Activated T-helper 1 cell treated with anti-CD3 and anti-CD28 coated beads, Interleukin-12 subunit alpha, Interleukin-12 subunit beta, Interleukin-2, Interleukin-4 antibody, amounts not matched to agents 30 ng/mL and 10 ng/mL and 1 ng/mL, durations not matched to agents 14 hours and 24 hours and 36 hours (primary cell): ENCODE measurements at regions of chr15 and their contacts with region 1.

Region 1: DNA sequence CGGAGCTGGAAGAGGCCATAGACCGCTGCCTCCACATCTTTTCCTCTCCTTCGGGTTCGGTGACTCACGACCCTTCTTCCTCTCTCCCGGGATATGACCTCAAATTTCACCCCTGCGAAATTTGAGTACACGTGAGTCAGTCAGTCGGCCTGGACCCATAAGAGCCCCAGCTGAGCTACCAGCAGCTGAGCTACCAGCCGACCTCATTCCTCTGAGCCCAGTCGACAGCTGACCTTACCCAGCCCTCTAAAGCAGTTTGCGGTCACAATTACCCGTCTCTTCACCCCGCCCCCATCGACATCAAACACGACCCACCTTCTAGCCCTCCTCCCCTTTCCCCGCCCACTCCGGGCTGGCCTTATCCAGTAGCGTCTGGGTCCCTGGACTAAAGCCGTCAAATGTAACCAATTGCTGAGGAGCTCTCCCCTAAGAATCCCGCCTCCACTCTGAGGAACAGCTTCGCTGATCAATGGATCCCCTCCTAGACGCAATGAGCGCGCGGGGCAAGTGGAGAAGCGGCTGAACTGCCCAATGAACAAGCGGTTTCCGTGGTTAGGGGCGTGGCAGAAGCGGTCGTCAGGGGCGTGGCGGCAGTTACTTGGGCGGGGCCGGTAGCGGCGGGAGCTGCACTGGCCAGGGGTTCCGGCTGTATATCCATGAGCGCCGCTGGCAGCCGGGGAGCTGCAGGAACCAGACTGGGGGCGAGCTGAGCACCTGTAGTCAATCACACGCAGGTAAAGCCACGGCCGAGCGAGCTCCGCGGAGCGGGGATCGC is at the start of gene ABHD2:
- DNase-seq: peak; percentile 98
- H3K4me3 Mint-ChIP-seq: no peak within 1 kb of the TSS
- H3K27ac Mint-ChIP-seq: no peak within 1 kb of the TSS
- H3K4me1 Mint-ChIP-seq: peaks cover 33% of the 10 kb centered on the region
- H3K27me3 Mint-ChIP-seq: no peaks in the 10 kb centered on the region
- total RNA-seq, gene ABHD2: 66.5 and 66.7 TPM in 2 replicates

Region 2: GRCh38 chr15:88904624-88905327 is 183.2 kb before region 1 on chr15:
- intact Hi-C with region 1: loop called (anchors 2 kb)
- DNase-seq: peak; percentile 86
- H3K4me3 Mint-ChIP-seq: no peak overlapping the region
- H3K27ac Mint-ChIP-seq: peak overlapping the region; percentile 19
- H3K4me1 Mint-ChIP-seq: peaks cover 22% of the 10 kb centered on the region
- H3K27me3 Mint-ChIP-seq: no peaks in the 10 kb centered on the region

Region 3: DNA sequence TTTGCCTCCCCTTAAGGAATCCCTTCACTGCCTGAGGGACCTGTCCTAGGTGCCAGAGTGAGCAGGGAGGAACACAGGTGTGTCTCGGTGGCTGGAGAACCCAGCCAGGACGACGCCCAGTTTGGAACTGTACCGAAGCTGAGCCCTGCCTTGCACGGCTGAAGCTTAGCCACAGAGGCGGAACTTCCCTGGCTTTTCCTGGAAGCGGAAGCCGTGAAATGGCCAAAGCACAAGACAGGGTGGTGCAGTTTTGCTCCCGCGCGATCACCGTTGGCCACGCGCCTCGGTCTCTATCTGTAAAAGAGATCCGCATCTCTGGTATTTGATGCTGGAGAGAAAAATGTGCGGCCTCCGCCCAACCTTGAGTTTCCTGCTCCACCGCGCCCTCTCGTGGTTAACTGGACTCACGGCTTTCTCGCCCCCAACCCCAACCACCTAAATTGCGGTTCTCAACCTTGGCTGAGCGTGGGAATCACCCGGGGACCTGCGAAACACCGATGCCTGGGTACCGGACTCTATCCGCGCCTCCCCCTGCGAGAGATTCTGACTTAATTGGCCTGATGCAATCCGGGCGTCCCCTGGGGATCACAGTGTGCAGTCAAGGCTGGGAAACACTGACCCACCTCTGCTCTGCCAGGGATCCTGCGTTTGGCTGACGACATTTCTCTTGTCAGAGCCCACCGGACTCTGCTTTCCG is 70.5 kb before region 1 on chr15:
- intact Hi-C with region 1: no loop called
- DNase-seq: peak; percentile 70
- H3K4me3 Mint-ChIP-seq: peak overlapping the region; percentile 61
- H3K27ac Mint-ChIP-seq: peak overlapping the region; percentile 61
- H3K4me1 Mint-ChIP-seq: peaks cover 27% of the 10 kb centered on the region
- H3K27me3 Mint-ChIP-seq: peaks cover 32% of the 10 kb centered on the region

Region 4: GRCh38 chr15:89068325-89068784 is 19.7 kb before region 1 on chr15:
- intact Hi-C with region 1: loop called (anchors 1 kb)
- DNase-seq: peak; percentile 11
- H3K4me3 Mint-ChIP-seq: peak overlapping the region; percentile 10
- H3K27ac Mint-ChIP-seq: peak overlapping the region; percentile 83
- H3K4me1 Mint-ChIP-seq: peaks cover 13% of the 10 kb centered on the region
- H3K27me3 Mint-ChIP-seq: no peaks in the 10 kb centered on the region

Region 5: GRCh38 chr15:89143503-89144162 is 55.6 kb after region 1 on chr15:
- intact Hi-C with region 1: loop called (anchors 1 kb)
- DNase-seq: no peak
- H3K4me3 Mint-ChIP-seq: peak overlapping the region; percentile 22
- H3K27ac Mint-ChIP-seq: no peak overlapping the region
- H3K4me1 Mint-ChIP-seq: peaks cover 31% of the 10 kb centered on the region
- H3K27me3 Mint-ChIP-seq: no peaks in the 10 kb centered on the region

Region 6: GRCh38 chr15:89243691-89244471 is 155.9 kb after region 1 on chr15 and contains the start of gene FANCI:
- intact Hi-C with region 1: loop called (anchors 1 kb)
- DNase-seq: peak; percentile 95
- H3K4me3 Mint-ChIP-seq: peak within 1 kb of the TSS; percentile 96
- H3K27ac Mint-ChIP-seq: peak within 1 kb of the TSS; percentile 90
- H3K4me1 Mint-ChIP-seq: peaks cover 53% of the 10 kb centered on the region
- H3K27me3 Mint-ChIP-seq: peaks cover 9% of the 10 kb centered on the region
- total RNA-seq, gene FANCI: 167 and 172 TPM in 2 replicates